Activated CD4-positive, alpha-beta memory T cell treated with anti-CD3 and anti-CD28 coated beads for 36 hours (primary cell): ENCODE measurements at regions of chr19 and their contacts with region 1.

Region 1: DNA sequence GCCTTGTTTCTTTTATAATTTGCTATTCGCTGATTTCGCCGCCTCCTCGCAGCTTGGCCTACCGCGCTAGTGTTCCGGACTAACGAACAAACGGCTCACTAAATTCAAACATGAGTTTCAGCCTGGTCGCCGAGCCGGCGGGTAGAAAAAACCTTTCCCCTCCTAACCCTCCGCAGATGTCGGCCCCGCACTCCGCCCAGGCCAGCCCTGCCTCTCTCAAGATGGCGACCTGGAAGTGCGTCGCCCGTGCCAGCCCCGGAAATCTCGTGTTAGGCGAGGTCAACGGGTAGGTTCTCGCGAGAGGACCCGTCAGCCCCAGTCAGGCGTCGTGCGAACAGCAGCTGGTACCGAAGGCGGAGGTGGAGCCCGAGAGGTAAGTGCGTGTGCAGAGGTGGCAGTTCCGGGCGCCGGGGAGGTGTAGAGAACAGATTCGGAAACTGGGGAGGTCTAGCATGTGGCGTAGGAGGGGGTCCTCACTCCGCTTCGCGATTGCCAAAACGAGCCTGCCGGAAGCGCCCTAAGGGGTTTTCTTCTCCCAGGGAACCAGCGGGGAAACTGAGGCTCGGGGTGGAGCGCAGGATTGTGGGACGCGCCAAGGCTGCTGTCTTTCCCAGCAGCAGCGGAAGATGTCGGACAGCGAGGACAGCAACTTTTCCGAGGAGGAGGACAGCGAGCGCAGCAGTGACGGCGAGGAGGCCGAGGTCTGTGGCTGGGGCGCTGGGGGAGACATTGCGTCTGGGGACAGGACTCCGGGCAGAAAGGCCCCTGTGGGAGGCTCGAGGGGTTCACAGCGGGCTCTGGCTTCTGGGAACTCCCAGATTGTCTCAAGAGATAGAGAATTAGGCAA is at the start of gene SUPT5H:
- DNase-seq: peak; percentile 99
- H3K4me3 Mint-ChIP-seq: peak within 1 kb of the TSS; percentile 98
- H3K27ac Mint-ChIP-seq: peak within 1 kb of the TSS; percentile 99
- H3K4me1 Mint-ChIP-seq: peaks cover 47% of the 10 kb centered on the region
- H3K27me3 Mint-ChIP-seq: no peaks in the 10 kb centered on the region
- total RNA-seq, gene SUPT5H: 180 to 183 TPM

Region 2: DNA sequence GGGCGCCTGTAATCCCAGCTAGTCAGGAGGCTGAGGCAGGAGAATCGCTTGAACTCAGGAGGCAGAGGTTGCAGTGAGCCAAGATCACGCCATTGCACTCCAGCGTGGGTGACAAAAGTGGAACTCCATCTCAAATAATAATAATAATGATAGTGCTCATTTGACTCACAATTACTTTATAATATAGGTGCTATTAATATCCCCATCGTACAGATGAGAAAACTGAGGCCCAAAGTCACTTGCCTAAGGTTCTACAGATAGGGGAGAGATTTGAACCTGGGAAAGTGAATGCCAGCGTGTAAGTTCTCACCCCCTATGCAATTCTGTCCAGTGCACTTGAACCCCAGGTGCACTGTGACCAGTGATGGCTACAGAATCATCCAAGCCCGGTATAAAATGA is 115.5 kb before region 1 on chr19:
- CTCF ChIA-PET with region 1: no interaction called
- POLR2A ChIA-PET with region 1: no interaction called
- intact Hi-C with region 1: no loop called
- DNase-seq: no peak
- H3K4me3 Mint-ChIP-seq: no peak overlapping the region
- H3K27ac Mint-ChIP-seq: no peak overlapping the region
- H3K4me1 Mint-ChIP-seq: peaks cover 48% of the 10 kb centered on the region
- H3K27me3 Mint-ChIP-seq: no peaks in the 10 kb centered on the region

Region 3: GRCh38 chr19:39390755-39391592 is 54.5 kb before region 1 on chr19 and contains the starts of genes MED29 and PAF1:
- CTCF ChIA-PET with region 1: no interaction called
- POLR2A ChIA-PET with region 1: no interaction called
- intact Hi-C with region 1: loop called (anchors 1 kb)
- DNase-seq: peak; percentile 98
- H3K4me3 Mint-ChIP-seq: peak within 1 kb of the TSS; percentile 95
- H3K27ac Mint-ChIP-seq: peak within 1 kb of the TSS; percentile 99
- H3K4me1 Mint-ChIP-seq: peaks cover 40% of the 10 kb centered on the region
- H3K27me3 Mint-ChIP-seq: no peaks in the 10 kb centered on the region
- total RNA-seq, gene MED29: 22.2 to 26.9 TPM
- total RNA-seq, gene PAF1: 41.6 to 43.8 TPM

Region 4: GRCh38 chr19:39474139-39474622 is 28.7 kb after region 1 on chr19:
- CTCF ChIA-PET with region 1: interaction called, 25 read pairs
- POLR2A ChIA-PET with region 1: no interaction called
- intact Hi-C with region 1: no loop called
- DNase-seq: peak; percentile 76
- H3K4me3 Mint-ChIP-seq: no peak overlapping the region
- H3K27ac Mint-ChIP-seq: no peak overlapping the region
- H3K4me1 Mint-ChIP-seq: peaks cover 25% of the 10 kb centered on the region
- H3K27me3 Mint-ChIP-seq: no peaks in the 10 kb centered on the region

Region 5: GRCh38 chr19:39502640-39503417 is 57.3 kb after region 1 on chr19:
- CTCF ChIA-PET with region 1: interaction called, 35 read pairs
- POLR2A ChIA-PET with region 1: interaction called, 5 read pairs
- intact Hi-C with region 1: loop called (anchors 2 kb)
- DNase-seq: peak; percentile 84
- H3K4me3 Mint-ChIP-seq: no peak overlapping the region
- H3K27ac Mint-ChIP-seq: no peak overlapping the region
- H3K4me1 Mint-ChIP-seq: peaks cover 33% of the 10 kb centered on the region
- H3K27me3 Mint-ChIP-seq: peaks cover 56% of the 10 kb centered on the region

Region 6: DNA sequence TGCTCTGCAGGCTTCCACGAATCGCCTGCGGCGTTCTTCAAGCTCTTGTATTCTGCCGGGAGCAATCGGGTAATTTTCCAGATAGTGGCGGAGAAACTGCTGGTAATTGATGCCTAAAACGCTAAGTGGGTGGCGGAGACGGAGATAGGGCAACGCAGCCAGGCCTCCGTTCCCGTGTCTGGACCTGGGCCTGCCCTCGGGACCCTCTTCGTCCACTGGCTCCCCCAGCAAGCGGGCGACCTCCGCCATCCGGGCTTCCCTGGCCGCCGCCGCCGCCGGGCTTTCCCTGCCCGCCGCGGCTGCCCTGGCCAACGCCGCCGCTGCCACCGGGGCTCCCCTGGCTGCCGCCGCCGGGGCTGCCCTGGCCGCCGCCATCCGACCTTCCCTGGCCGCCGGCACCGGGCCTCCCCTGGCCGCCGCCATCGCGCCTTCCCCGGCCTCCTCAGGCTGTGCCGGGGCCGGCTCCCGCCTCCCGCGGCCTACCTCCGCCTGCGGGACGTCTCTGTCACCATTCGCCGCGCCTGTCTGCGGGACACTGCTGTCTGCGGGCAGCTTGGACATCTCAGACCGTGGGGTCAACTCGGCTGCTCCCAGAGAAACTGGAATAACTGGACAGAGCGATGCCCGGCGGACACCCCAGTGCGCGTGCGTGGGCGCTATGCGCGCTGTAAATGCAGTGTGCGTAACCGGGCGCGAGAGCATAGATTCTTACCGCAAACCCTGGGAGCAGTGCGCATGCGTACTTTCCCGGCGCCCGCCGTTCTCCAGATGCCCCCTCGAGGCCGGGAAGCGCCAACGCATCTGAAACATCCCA is 94.2 kb after region 1 on chr19 and contains the start of gene EID2:
- CTCF ChIA-PET with region 1: interaction called, 53 read pairs
- POLR2A ChIA-PET with region 1: interaction called, 6 read pairs
- intact Hi-C with region 1: loop called (anchors 1 kb)
- DNase-seq: peak; percentile 98
- H3K4me3 Mint-ChIP-seq: peak within 1 kb of the TSS; percentile 94
- H3K27ac Mint-ChIP-seq: peak within 1 kb of the TSS; percentile 96
- H3K4me1 Mint-ChIP-seq: peaks cover 51% of the 10 kb centered on the region
- H3K27me3 Mint-ChIP-seq: peaks cover 2% of the 10 kb centered on the region
- total RNA-seq, gene EID2: 13.0 to 13.1 TPM

Region 7: DNA sequence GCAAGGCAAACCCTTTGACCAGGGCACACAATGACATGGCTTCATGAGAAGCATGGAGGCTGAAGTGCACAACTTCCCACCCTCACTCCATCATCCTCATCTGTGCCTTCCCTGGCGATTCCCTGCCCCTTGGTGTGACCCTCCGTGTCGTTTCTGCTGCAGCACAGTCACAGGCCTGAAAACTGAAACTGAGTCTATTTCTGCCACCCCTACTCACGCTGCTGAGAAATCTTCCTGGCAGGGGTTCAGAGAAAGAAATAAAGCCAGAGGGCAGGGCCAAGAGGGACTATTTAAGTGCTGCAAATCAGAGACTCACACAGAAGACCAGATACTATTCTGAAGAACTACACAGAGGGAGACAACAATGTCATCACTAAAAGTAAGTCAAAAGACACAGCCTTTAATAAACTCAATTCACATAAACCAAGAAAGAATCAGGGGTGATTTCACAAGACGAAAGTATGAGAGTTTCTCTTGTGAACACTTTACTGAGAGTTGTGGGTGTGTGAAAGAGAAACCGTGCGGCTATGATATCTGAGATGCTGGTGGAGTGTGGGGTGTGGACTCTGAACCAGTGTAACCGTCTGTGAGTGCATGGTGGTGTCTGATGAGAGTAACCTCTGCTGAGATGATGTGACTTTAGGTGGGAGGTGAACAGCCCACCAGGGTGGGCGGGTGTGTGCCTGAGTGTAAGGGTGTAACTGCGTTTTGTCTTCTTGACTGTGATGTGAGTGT is 233.7 kb after region 1 on chr19:
- CTCF ChIA-PET with region 1: interaction called, 26 read pairs
- POLR2A ChIA-PET with region 1: no interaction called
- intact Hi-C with region 1: loop called (anchors 2 kb)
- DNase-seq: peak; percentile 80
- H3K4me3 Mint-ChIP-seq: peak overlapping the region; percentile 76
- H3K27ac Mint-ChIP-seq: peak overlapping the region; percentile 93
- H3K4me1 Mint-ChIP-seq: peaks cover 55% of the 10 kb centered on the region
- H3K27me3 Mint-ChIP-seq: no peaks in the 10 kb centered on the region